Naive thymus-derived CD4-positive, alpha-beta T cell (primary cell): ENCODE measurements at regions of chr2 and their contacts with region 1.

Region 1: DNA sequence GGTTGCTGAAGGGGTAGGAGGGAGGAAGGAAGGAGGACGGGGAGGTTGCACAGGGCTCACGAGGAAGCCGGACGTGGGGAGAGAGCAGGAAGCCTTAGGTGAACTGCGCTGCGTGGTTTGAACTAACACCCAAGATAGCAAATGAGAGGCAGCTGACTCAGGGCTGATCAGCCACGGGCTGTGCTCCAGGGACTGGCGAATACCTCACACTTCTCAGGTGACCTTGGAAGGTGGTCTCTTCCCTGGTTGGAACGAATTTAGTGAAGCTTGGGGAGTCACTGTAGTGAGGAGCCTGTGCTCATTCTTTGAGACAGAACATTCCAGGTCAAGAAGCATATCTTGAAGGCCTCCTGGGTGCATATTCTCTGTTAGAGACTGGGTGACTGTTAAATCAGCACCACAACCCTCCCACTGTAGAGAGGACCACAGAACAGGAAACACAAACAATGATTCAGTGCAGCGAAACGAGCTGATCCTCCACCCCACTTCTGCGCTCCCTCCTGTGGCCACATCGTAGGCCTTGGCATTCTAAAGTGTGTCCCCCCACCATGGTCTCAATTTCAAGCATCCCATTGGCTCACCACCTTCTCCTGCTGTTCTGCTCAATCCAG is 33.8 kb downstream of the TOGARAM2 start:
- DNase-seq: peak in 8 of 9 donors; percentile 33 to 75 (median 70)
- ATAC-seq: peak; percentile 75
- H3K4me3 ChIP-seq: peak overlapping the region; percentile 27
- H3K4me3 Mint-ChIP-seq: peak overlapping the region; percentile 74 to 94 (median 84)
- H3K27ac ChIP-seq: peak overlapping the region; percentile 77
- H3K27ac Mint-ChIP-seq: peak overlapping the region; percentile 94 to 100 (median 99)
- H3K4me1 ChIP-seq: peaks cover 72 to 83% of the 10 kb centered on the region in 2 donors
- H3K4me1 Mint-ChIP-seq: peaks cover 62 to 73% (median 72%) of the 10 kb centered on the region in 7 donors
- H3K27me3 ChIP-seq: no peaks in the 10 kb centered on the region
- H3K27me3 Mint-ChIP-seq: no peaks in the 10 kb centered on the region

Region 2: DNA sequence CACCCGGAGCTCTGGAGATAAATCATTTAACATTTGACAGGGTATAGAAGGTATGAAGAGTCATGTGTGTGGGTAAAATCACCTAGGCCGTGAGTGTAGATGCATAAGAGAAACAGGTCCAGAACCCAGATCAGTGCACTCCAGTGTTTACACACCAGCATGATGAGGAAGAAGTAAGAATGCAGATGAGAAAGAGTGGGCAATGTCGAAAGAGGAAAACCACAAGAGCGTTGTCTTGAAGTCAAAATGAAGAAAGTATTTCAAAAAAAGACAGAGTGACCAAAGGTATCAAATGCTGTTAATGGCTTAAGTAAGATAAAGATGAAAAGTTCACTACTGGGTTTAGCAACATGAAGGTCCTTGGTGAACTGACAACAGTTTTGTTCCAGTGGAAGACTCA is 551.0 kb before region 1 on chr2:
- CTCF ChIA-PET with region 1: no interaction called
- POLR2A ChIA-PET with region 1: no interaction called
- intact Hi-C with region 1: no loop called
- DNase-seq: no peak
- ATAC-seq: peak; percentile 72
- H3K4me3 ChIP-seq: no peak overlapping the region
- H3K4me3 Mint-ChIP-seq: no peak overlapping the region
- H3K27ac ChIP-seq: no peak overlapping the region
- H3K27ac Mint-ChIP-seq: no peak overlapping the region
- H3K4me1 ChIP-seq: no peaks in the 10 kb centered on the region
- H3K4me1 Mint-ChIP-seq: peaks cover 0 to 32% (median 0%) of the 10 kb centered on the region in 7 donors
- H3K27me3 ChIP-seq: no peaks in the 10 kb centered on the region
- H3K27me3 Mint-ChIP-seq: peaks cover 0 to 14% (median 5%) of the 10 kb centered on the region in 5 donors

Region 3: GRCh38 chr2:28566521-28567041 is 448.3 kb before region 1 on chr2:
- CTCF ChIA-PET with region 1: no interaction called
- POLR2A ChIA-PET with region 1: no interaction called
- intact Hi-C with region 1: loop called in 1 of 2 experiments (anchors 2 kb)
- DNase-seq: peak; percentile 81 to 96 (median 90)
- ATAC-seq: peak; percentile 100
- H3K4me3 ChIP-seq: peak overlapping the region; percentile 74
- H3K4me3 Mint-ChIP-seq: peak overlapping the region; percentile 84 to 95 (median 92)
- H3K27ac ChIP-seq: peak overlapping the region; percentile 84
- H3K27ac Mint-ChIP-seq: peak overlapping the region; percentile 59 to 96 (median 92)
- H3K4me1 ChIP-seq: peaks cover 6 to 12% of the 10 kb centered on the region in 2 donors
- H3K4me1 Mint-ChIP-seq: peaks cover 6 to 24% (median 16%) of the 10 kb centered on the region in 7 donors
- H3K27me3 ChIP-seq: peaks cover 0 to 3% of the 10 kb centered on the region in 2 donors
- H3K27me3 Mint-ChIP-seq: peaks cover 0 to 6% (median 0%) of the 10 kb centered on the region in 5 donors

Region 4: DNA sequence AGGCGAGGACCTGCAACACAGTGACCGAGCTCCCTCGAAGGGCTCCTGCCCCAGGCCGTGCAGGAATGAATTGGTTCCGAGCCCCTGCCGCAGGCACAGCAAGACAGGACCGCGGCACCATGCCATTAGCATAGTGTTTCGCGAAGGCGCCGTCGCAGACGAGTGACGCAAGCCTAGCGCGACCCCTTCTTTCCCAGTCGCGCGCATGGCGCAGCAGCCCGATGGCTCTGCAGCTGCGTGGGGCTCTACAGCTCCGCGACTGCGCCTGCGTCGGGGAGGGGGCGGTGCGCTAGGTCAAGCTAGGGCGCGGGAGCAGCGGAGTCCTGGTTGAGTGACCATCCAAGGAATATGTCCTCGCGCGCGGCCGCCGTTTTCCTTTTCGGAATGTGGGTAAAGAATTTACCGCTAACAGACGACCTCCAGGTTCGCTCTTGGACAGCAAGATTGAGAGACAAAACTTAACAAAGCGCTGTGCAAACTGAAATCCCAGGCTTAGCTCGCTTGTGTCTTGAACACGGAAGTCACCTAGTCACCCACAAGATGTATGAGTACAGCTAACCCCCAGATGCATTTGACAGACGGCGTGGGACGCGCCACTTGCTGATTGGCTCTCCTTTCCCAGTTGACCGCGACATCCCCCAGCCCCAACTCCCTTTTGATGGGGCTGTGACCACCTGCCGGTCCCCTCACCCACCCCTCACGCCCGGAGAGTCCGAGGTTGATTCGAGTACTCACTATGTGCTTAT is 144.6 kb before region 1 on chr2 and contains the start of gene TRMT61B:
- CTCF ChIA-PET with region 1: no interaction called
- POLR2A ChIA-PET with region 1: interaction called, 8 read pairs
- intact Hi-C with region 1: loop called (anchors 1 kb)
- DNase-seq: peak; percentile 94 to 97 (median 95)
- ATAC-seq: peak; percentile 98
- H3K4me3 ChIP-seq: peak within 1 kb of the TSS; percentile 96
- H3K4me3 Mint-ChIP-seq: peak within 1 kb of the TSS; percentile 90 to 98 (median 96)
- H3K27ac ChIP-seq: peak within 1 kb of the TSS; percentile 87
- H3K27ac Mint-ChIP-seq: peak within 1 kb of the TSS; percentile 95 to 100 (median 98)
- H3K4me1 ChIP-seq: peaks cover 19 to 22% of the 10 kb centered on the region in 2 donors
- H3K4me1 Mint-ChIP-seq: peaks cover 22 to 48% (median 37%) of the 10 kb centered on the region in 7 donors
- H3K27me3 ChIP-seq: no peaks in the 10 kb centered on the region
- H3K27me3 Mint-ChIP-seq: peaks cover 0 to 6% (median 2%) of the 10 kb centered on the region in 5 donors
- total RNA-seq, gene TRMT61B: 14.8 to 24.5 (median 20.5) TPM

Region 5: GRCh38 chr2:28958689-28959088 is 56.2 kb before region 1 on chr2:
- CTCF ChIA-PET with region 1: interaction called, 12 read pairs
- POLR2A ChIA-PET with region 1: interaction called, 5 read pairs
- intact Hi-C with region 1: loop called (anchors 1 kb)
- DNase-seq: peak in 7 of 9 donors; percentile 32 to 63 (median 53)
- ATAC-seq: peak; percentile 80
- H3K4me3 ChIP-seq: no peak overlapping the region
- H3K4me3 Mint-ChIP-seq: no peak overlapping the region
- H3K27ac ChIP-seq: no peak overlapping the region
- H3K27ac Mint-ChIP-seq: peak overlapping the region in 1 of 9 donors; percentile 12
- H3K4me1 ChIP-seq: no peaks in the 10 kb centered on the region
- H3K4me1 Mint-ChIP-seq: peaks cover 0 to 18% (median 4%) of the 10 kb centered on the region in 7 donors
- H3K27me3 ChIP-seq: no peaks in the 10 kb centered on the region
- H3K27me3 Mint-ChIP-seq: peaks cover 0 to 13% (median 0%) of the 10 kb centered on the region in 5 donors

Region 6: DNA sequence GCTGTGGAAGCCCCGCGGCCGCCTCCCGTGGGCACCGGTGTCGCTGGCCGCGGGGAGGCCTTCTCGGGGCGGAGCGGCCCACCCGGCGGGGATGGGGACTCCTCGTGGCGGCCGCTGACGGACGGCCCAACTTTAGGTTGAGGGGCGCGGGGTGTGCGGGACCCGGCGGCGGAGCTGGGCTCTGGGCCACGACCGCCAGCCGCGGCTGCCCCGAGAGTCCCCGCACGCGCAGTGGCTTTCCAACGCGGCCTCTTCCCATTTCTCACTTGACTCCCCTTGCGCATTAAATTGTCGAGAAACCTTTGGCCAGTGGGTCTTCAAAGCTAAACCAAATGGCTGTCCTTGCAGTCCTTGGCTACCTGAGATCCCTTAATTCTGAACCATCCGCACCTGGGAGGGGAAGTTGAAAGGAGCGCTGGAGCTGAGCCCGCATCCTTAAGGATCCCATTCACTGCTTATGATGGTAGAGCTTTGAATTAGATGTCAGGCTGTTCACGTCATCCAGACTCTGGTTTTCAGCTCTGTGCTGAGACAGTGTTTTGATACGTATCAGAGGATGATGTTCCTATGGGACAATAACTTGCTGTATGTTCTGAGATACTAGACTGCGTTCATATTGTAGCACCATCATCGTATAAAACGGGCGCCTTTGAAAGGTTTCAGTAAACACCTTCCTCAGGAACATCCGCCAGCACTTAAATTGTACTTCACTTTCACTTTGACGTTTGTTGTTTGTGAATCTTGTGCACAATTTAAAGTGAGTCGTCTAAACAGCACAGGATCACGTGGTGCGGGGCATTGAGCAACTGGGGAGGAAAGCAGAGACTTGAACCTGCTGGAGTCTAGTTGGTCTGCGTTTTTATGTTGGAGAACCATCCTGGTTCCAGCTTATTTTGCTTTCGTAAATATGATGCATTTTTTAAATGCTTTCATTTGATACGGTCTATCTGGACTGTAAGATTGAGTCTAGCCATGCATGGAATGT is 101.2 kb after region 1 on chr2:
- CTCF ChIA-PET with region 1: interaction called, 4 read pairs
- POLR2A ChIA-PET with region 1: interaction called, 80 read pairs
- intact Hi-C with region 1: loop called (anchors 1 kb)
- DNase-seq: peak; percentile 39 to 82 (median 75)
- ATAC-seq: peak; percentile 62
- H3K4me3 ChIP-seq: peak overlapping the region; percentile 75
- H3K4me3 Mint-ChIP-seq: peak overlapping the region; percentile 86 to 98 (median 88)
- H3K27ac ChIP-seq: peak overlapping the region; percentile 73
- H3K27ac Mint-ChIP-seq: peak overlapping the region; percentile 87 to 99 (median 97)
- H3K4me1 ChIP-seq: peaks cover 8 to 20% of the 10 kb centered on the region in 2 donors
- H3K4me1 Mint-ChIP-seq: peaks cover 23 to 61% (median 55%) of the 10 kb centered on the region in 7 donors
- H3K27me3 ChIP-seq: no peaks in the 10 kb centered on the region
- H3K27me3 Mint-ChIP-seq: peaks cover 0 to 12% (median 0%) of the 10 kb centered on the region in 5 donors

Region 7: DNA sequence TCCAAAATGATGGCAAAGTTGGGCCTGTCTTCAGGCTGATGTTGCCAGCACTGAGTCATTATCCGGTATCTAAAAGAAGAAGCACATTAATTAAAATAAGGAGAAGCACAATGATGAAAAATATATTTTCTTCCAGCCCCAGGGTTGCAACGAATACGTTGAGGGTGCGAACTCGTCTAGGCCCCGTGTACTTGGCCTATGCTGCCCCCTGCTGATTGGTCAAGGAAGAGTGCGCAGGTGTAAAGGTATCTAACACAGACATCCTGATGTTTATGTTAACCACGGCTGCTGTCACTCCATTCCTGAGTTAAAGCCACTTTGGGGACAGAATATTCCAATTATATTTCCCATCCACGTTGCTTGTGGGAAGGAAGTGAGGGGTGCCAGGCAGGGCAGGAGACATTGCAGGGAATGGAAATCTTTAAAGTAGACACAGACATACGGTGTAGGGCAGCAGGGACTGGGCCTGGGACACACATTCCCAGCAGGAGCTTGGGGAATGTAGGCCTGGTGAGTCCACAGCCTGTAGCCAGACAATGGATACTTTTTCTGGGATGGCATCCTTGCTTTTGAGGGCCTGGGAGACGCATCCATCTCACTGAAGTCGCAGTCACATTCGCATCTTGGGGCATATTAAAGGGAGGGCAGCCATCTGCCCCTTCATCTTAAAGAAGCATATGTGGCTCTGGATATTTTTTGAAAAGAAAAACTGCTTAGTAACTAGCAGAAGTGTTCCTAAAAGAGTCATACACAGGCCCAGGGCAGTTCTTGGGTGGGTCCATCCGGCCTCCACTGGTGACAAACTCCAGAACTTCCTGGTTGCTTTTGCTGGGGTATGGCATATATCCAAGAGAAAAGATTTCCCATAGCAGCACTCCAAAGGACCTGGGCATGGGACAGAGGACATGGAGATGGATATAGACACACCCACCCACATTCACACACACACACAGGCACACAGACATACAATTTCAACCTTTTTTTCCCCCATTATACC is 182.2 kb after region 1 on chr2:
- CTCF ChIA-PET with region 1: interaction called, 3 read pairs
- POLR2A ChIA-PET with region 1: no interaction called
- intact Hi-C with region 1: loop called (anchors 1 to 2 kb)
- DNase-seq: peak; percentile 46 to 86 (median 73)
- ATAC-seq: peak; percentile 96
- H3K4me3 ChIP-seq: no peak overlapping the region
- H3K4me3 Mint-ChIP-seq: no peak overlapping the region
- H3K27ac ChIP-seq: no peak overlapping the region
- H3K27ac Mint-ChIP-seq: peak overlapping the region in 1 of 9 donors; percentile 67
- H3K4me1 ChIP-seq: no peaks in the 10 kb centered on the region
- H3K4me1 Mint-ChIP-seq: peaks cover 0 to 9% (median 5%) of the 10 kb centered on the region in 7 donors
- H3K27me3 ChIP-seq: no peaks in the 10 kb centered on the region
- H3K27me3 Mint-ChIP-seq: no peaks in the 10 kb centered on the region

Region 8: DNA sequence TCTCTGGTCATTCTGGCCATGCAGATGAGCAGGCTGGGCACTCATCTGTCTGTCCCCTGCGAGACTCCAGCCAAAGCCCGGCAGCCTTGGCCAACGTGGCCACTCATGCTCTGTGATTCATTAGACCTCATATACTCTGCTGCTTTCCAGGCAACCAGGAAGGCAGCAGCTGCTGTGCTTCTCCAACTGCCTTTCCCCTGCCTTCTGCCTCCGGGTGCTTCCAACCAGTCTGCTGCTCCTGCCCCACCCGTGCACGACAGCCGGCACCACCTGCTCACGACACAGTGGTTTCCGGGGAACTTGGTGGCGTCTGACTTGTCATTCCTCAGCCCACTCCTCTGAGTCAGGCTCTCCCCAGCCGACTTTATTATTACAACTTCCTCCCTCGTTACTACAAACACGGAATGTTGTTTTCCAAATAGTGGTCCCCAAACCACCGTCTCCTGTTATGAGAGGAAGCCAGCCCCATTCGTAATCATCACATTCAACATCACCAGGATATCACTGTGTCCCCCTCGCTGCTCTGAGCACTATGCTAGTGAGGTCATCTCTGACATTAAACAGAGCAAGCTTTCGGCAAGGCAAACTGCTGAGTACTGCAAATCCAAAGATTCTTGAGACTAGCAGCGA is 514.1 kb after region 1 on chr2:
- CTCF ChIA-PET with region 1: no interaction called
- POLR2A ChIA-PET with region 1: no interaction called
- intact Hi-C with region 1: no loop called
- DNase-seq: peak in 1 of 9 donors; percentile 23
- ATAC-seq: peak; percentile 32
- H3K4me3 ChIP-seq: no peak overlapping the region
- H3K4me3 Mint-ChIP-seq: no peak overlapping the region
- H3K27ac ChIP-seq: no peak overlapping the region
- H3K27ac Mint-ChIP-seq: no peak overlapping the region
- H3K4me1 ChIP-seq: no peaks in the 10 kb centered on the region
- H3K4me1 Mint-ChIP-seq: peaks cover 0 to 6% (median 0%) of the 10 kb centered on the region in 7 donors
- H3K27me3 ChIP-seq: no peaks in the 10 kb centered on the region
- H3K27me3 Mint-ChIP-seq: peaks cover 9 to 42% (median 26%) of the 10 kb centered on the region in 5 donors